ENCODE measurements at regions of chr6 and their contacts with region 1.

Region 1: GRCh38 chr6:31546962-31547726 is at the start of gene NFKBIL1:
- DNase-seq: peak; percentile 94
- ATAC-seq: peak; percentile 67
- H3K4me3 Mint-ChIP-seq: peak within 1 kb of the TSS; percentile 82
- H3K27ac Mint-ChIP-seq: peak within 1 kb of the TSS; percentile 98
- H3K4me1 Mint-ChIP-seq: peaks cover 22% of the 10 kb centered on the region
- H3K27me3 Mint-ChIP-seq: no peaks in the 10 kb centered on the region
- CTCF ChIP-seq: no peak
- total RNA-seq, gene NFKBIL1: 14.9 to 19.5 TPM (median 17.1 TPM) in 3 replicates

Region 2: DNA sequence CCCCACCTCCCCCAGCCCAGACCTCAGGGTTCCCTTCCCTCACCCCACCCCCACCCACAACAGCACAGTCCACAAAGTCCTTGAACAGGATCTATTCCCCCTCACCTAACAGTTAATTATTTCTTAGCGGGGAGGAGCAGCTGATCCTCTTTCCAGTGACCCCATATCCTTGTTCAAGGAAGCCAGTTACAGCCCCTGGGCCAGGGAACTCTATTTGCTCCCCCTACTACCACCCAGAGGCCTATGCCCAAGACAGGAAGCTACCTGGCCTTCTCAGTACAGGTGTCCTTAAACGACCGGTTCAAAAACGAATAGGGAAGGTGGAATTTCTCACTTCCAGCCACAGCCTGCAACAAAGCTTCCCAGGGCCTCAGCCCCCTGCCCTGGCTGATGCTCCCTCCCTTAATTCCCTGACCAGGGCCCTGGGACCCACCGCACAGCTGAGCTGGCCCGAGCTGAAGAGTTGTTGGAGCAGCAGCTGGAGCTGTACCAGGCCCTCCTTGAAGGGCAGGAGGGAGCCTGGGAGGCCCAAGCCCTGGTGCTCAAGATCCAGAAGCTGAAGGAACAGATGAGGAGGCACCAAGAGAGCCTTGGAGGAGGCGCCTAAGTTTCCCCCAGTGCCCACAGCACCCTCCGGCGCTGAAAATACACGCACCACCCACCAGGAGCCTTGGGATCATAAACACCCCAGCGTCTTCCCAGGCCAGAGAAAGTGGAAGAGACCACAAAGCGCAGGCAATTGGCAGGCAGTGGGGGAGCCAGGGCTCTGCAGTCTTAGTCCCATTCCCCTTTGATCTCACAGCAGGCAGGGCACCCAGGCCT is 17.6 kb before region 1 on chr6:
- CTCF ChIA-PET with region 1: interaction called, 10 read pairs
- POLR2A ChIA-PET with region 1: interaction called, 17 read pairs
- DNase-seq: no peak
- ATAC-seq: peak; percentile 31
- H3K4me3 Mint-ChIP-seq: no peak overlapping the region
- H3K27ac Mint-ChIP-seq: peak overlapping the region; percentile 65; the same call in 1 of the 2 replicates
- H3K4me1 Mint-ChIP-seq: peaks cover 36% of the 10 kb centered on the region
- H3K27me3 Mint-ChIP-seq: no peaks in the 10 kb centered on the region
- CTCF ChIP-seq: no peak

Region 3: DNA sequence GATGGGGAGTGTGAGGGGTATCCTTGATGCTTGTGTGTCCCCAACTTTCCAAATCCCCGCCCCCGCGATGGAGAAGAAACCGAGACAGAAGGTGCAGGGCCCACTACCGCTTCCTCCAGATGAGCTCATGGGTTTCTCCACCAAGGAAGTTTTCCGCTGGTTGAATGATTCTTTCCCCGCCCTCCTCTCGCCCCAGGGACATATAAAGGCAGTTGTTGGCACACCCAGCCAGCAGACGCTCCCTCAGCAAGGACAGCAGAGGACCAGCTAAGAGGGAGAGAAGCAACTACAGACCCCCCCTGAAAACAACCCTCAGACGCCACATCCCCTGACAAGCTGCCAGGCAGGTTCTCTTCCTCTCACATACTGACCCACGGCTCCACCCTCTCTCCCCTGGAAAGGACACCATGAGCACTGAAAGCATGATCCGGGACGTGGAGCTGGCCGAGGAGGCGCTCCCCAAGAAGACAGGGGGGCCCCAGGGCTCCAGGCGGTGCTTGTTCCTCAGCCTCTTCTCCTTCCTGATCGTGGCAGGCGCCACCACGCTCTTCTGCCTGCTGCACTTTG is 28.3 kb after region 1 on chr6 and contains the start of gene TNF:
- CTCF ChIA-PET with region 1: interaction called, 52 read pairs
- POLR2A ChIA-PET with region 1: interaction called, 5 read pairs
- DNase-seq: no peak
- ATAC-seq: no peak
- H3K4me3 Mint-ChIP-seq: no peak within 1 kb of the TSS
- H3K27ac Mint-ChIP-seq: no peak within 1 kb of the TSS
- H3K4me1 Mint-ChIP-seq: peaks cover 29% of the 10 kb centered on the region
- H3K27me3 Mint-ChIP-seq: peaks cover 40% of the 10 kb centered on the region
- CTCF ChIP-seq: no peak
- total RNA-seq, gene TNF: 0.23 to 0.46 TPM (median 0.31 TPM) in 3 replicates

Region 4: GRCh38 chr6:31619805-31620585 is 72.9 kb after region 1 on chr6:
- CTCF ChIA-PET with region 1: interaction called, 16 read pairs
- POLR2A ChIA-PET with region 1: interaction called, 8 read pairs
- DNase-seq: peak; percentile 97
- ATAC-seq: peak; percentile 91
- H3K4me3 Mint-ChIP-seq: peak overlapping the region; percentile 92
- H3K27ac Mint-ChIP-seq: peak overlapping the region; percentile 100
- H3K4me1 Mint-ChIP-seq: peaks cover 31% of the 10 kb centered on the region
- H3K27me3 Mint-ChIP-seq: no peaks in the 10 kb centered on the region; the same call in 1 of the 2 replicates
- CTCF ChIP-seq: no peak